SK-N-SH (cell line): ENCODE measurements at regions of chr10 and their contacts with region 1.

Region 1: GRCh38 chr10:13659897-13660550 is 73.3 kb downstream of the PRPF18 start:
- DNase-seq: peak; percentile 88
- H3K4me3 ChIP-seq: peak overlapping the region in 1 of 2 experiments; percentile 41; a peak in 1 of 4 replicates
- H3K27ac ChIP-seq: peak overlapping the region; percentile 23 to 52; a peak in 2 of 4 replicates
- H3K4me1 ChIP-seq: peaks cover 3 to 14% of the 10 kb centered on the region in 2 experiments; a peak in 2 of 4 replicates
- H3K27me3 ChIP-seq: no peaks in the 10 kb centered on the region
- CTCF ChIP-seq: peak; percentile 97
- EP300 ChIP-seq: no peak
- RAD21 ChIP-seq: peak; percentile 89

Region 2: DNA sequence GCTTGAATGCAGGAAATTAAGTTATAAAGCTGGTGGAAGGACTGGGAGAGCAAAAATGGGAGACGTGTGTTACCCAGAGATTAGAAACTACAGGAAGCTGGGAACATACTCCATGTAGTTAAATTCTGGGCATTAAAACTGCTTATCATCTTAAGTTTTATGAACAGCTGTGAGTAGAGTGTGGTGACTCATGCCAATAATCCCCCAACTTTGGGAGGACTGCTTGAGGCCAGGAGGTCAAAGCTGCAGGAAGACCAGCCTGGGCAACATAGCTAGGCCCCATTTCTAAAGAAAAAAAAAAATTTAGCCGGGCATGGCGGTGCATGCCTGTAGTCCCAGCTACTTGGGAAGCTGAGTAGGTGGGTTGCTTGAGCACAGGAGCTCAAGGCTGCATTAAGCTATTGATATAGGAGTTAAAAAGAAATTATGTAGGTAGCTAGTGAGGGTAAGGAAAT is 255.7 kb before region 1 on chr10:
- CTCF ChIA-PET with region 1: no interaction called
- POLR2A ChIA-PET with region 1: no interaction called
- DNase-seq: no peak
- H3K4me3 ChIP-seq: no peak overlapping the region
- H3K27ac ChIP-seq: no peak overlapping the region
- H3K4me1 ChIP-seq: no peaks in the 10 kb centered on the region
- H3K27me3 ChIP-seq: no peaks in the 10 kb centered on the region; the same call in 1 of the 2 replicates
- CTCF ChIP-seq: no peak
- EP300 ChIP-seq: no peak
- RAD21 ChIP-seq: no peak

Region 3: GRCh38 chr10:13643016-13643415 is 17.0 kb before region 1 on chr10:
- CTCF ChIA-PET with region 1: interaction called, 18 read pairs
- POLR2A ChIA-PET with region 1: no interaction called
- DNase-seq: no peak
- H3K4me3 ChIP-seq: no peak overlapping the region
- H3K27ac ChIP-seq: no peak overlapping the region
- H3K4me1 ChIP-seq: no peaks in the 10 kb centered on the region
- H3K27me3 ChIP-seq: no peaks in the 10 kb centered on the region
- CTCF ChIP-seq: no peak
- EP300 ChIP-seq: no peak
- RAD21 ChIP-seq: no peak

Region 4: GRCh38 chr10:13678101-13678843 is 18.2 kb after region 1 on chr10:
- CTCF ChIA-PET with region 1: interaction called, 16 read pairs
- POLR2A ChIA-PET with region 1: no interaction called
- DNase-seq: no peak
- H3K4me3 ChIP-seq: no peak overlapping the region
- H3K27ac ChIP-seq: no peak overlapping the region
- H3K4me1 ChIP-seq: peaks cover 0 to 3% of the 10 kb centered on the region in 2 experiments; a peak in 3 of 4 replicates
- H3K27me3 ChIP-seq: no peaks in the 10 kb centered on the region
- CTCF ChIP-seq: no peak
- EP300 ChIP-seq: no peak
- RAD21 ChIP-seq: no peak

Region 5: DNA sequence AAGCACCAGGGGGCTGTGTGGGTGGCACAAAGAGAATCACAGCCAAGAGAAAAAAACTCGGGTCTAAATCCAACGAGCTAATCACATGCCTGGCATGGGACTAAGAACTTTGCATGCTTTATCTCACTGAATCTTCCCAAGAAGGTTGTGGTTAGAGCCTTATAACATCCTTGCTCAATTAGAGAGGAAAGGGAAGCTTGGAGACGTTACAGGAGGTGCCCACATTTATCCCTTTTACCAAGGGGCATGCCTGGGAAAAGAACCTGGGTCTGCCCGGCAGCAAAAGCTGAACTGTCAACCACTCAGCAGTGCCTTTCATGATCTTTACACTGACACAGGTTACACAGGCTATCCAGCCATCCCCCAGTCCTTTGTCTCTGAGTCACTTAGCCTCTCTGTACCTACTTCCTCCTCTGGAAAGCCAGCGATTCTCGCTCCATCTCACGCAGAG is 116.9 kb after region 1 on chr10:
- CTCF ChIA-PET with region 1: interaction called, 18 read pairs
- POLR2A ChIA-PET with region 1: no interaction called
- DNase-seq: no peak
- H3K4me3 ChIP-seq: no peak overlapping the region
- H3K27ac ChIP-seq: peak overlapping the region; percentile 13 to 83; a peak in 3 of 4 replicates
- H3K4me1 ChIP-seq: peaks cover 0 to 8% of the 10 kb centered on the region in 2 experiments; a peak in 1 of 4 replicates
- H3K27me3 ChIP-seq: no peaks in the 10 kb centered on the region
- CTCF ChIP-seq: no peak
- EP300 ChIP-seq: peak in 1 of 2 experiments; percentile 26; a peak in 1 of 4 replicates
- RAD21 ChIP-seq: no peak

Region 6: GRCh38 chr10:13787015-13787421 is 127.0 kb after region 1 on chr10:
- CTCF ChIA-PET with region 1: interaction called, 11 read pairs
- POLR2A ChIA-PET with region 1: no interaction called
- DNase-seq: no peak
- H3K4me3 ChIP-seq: no peak overlapping the region
- H3K27ac ChIP-seq: peak overlapping the region; percentile 31 to 71; a peak in 3 of 4 replicates
- H3K4me1 ChIP-seq: peaks cover 24 to 34% of the 10 kb centered on the region in 2 experiments; a peak in 3 of 4 replicates
- H3K27me3 ChIP-seq: no peaks in the 10 kb centered on the region
- CTCF ChIP-seq: no peak
- EP300 ChIP-seq: no peak
- RAD21 ChIP-seq: no peak